Activated T-helper 2 cell treated with anti-CD3 and anti-CD28 coated beads, Interferon-gamma antibody, Interleukin-2, Interleukin-4, amounts not matched to agents 10 μg/mL and 5 μg/mL and 100 μg/mL, durations not matched to agents 14 hours and 24 hours and 36 hours (primary cell): ENCODE measurements at regions of chr12 and their contacts with region 1.

Region 1: DNA sequence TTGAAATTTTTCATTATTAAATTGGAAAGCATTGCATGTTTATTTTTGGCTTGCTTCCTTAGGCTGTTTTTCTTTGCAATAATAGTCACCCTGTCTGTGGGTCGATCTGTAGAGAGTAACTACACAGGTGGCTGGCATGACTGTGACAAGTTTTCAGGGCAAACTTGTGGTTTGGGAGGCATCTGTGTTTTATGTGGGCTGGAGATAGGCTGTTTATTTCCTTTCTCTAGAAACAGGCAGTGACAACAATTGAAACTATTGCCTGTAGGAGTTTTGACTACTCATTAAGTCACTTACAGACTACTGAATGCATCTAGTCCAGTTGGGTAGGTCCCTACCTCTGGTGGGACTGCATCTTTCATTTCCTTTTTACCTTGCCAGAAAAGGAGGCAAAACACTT is 155.6 kb downstream of the DYRK2 start:
- DNase-seq: peak; percentile 26
- H3K4me3 Mint-ChIP-seq: no peak overlapping the region
- H3K27ac Mint-ChIP-seq: no peak overlapping the region
- H3K4me1 Mint-ChIP-seq: peaks cover 29% of the 10 kb centered on the region
- H3K27me3 Mint-ChIP-seq: peaks cover 2% of the 10 kb centered on the region

Region 2: DNA sequence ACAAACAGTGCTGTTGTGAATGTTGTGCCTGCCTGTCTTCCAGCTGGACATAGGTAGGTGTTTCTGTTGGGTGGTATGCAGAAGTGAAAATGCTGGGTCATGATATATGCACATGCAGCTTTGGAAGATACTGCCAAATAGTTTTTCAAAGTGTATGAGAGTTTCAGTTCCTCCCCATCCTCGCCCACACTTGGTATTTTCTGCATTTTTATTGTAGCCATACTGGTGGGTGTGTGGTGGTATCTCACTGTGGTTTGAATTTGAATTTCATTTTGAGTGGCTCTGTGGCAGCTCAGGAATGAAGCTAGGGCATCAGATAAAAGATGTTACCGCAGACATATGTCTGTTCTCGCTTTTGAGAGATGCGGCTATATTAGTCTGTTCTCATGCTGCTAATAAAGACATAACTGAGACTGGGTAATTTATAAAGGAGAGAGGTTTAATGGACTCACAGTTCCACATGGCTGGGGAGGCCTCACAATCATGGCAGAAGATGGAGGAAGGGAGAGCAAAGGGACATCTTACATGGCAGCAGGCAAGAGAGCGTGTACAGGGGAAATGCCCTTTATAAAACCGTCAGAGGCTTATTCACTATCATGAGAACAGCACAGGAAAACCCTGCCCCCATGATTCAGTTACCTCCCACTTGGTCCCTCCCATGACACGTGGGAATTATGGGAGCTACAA is 351.9 kb before region 1 on chr12:
- intact Hi-C with region 1: loop called (anchors 2 kb)
- DNase-seq: no peak
- H3K4me3 Mint-ChIP-seq: no peak overlapping the region
- H3K27ac Mint-ChIP-seq: peak overlapping the region; percentile 64
- H3K4me1 Mint-ChIP-seq: peaks cover 37% of the 10 kb centered on the region
- H3K27me3 Mint-ChIP-seq: peaks cover 38% of the 10 kb centered on the region

Region 3: DNA sequence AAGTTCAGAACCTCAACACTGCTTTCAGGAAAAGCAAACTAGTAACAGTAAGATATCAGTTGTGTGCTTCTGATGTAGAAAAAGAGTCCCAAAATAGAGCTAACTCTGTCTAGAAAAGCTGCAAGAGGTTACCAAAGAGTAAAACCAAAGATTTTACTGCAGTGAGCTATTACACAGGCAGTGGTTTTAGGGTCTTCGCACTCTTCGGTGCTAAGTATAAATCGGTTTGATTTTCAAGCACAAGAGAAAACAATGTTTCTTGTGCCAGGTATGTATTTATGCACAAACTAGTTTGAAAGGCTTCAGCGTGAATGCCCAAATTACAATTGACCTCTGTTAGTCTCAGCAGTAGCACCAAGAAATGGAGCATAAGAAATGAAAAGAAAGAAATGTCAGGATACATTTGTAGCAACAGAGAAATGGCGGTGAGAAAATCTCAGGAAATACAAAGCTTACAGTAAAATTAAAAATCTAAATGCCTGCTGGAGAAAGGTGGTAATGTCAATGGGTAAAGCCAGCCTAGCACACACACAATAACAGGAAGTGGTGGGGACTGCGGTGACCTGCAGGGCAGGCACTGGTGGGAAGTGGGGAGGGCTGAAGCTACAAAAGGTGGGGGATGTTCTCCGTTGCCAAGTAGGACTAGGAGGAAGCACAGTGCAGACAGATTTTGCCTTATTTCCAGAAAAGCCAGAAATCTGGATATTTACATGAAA is 173.6 kb before region 1 on chr12:
- intact Hi-C with region 1: loop called (anchors 5 kb)
- DNase-seq: peak; percentile 81
- H3K4me3 Mint-ChIP-seq: peak overlapping the region; percentile 7
- H3K27ac Mint-ChIP-seq: peak overlapping the region; percentile 52
- H3K4me1 Mint-ChIP-seq: peaks cover 42% of the 10 kb centered on the region
- H3K27me3 Mint-ChIP-seq: peaks cover 1% of the 10 kb centered on the region

Region 4: DNA sequence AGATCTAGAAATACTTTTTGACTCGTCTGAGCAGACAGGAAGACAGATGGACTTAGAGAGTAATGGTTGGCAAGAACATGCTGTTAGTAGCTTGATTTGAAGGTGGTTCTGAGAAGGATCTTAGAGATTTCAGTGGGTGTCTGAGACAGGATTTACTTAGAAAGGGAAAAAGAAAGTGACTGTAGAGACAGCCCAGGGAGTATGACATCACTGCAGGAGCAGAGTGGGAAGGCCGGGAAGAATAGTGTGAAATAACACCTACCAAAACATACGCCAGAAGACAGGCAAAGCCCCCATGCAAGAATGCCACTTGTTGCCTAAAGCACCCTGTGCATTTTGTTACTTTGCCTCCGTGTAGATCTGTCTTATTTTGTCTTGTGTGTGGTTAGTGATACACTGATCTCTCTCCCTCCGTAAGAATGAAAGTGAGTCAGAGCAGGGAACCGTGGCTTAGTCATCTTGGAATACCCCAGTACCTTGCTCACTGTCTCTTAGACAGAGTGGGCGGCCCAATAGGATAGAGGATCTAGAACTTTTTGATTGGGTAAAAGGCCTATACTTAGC is 23.7 kb after region 1 on chr12:
- intact Hi-C with region 1: loop called (anchors 1 kb)
- DNase-seq: peak; percentile 11
- H3K4me3 Mint-ChIP-seq: peak overlapping the region; percentile 50
- H3K27ac Mint-ChIP-seq: peak overlapping the region; percentile 81
- H3K4me1 Mint-ChIP-seq: peaks cover 13% of the 10 kb centered on the region
- H3K27me3 Mint-ChIP-seq: no peaks in the 10 kb centered on the region

Region 5: GRCh38 chr12:67873355-67873754 is 69.2 kb after region 1 on chr12:
- intact Hi-C with region 1: no loop called
- DNase-seq: no peak
- H3K4me3 Mint-ChIP-seq: no peak overlapping the region
- H3K27ac Mint-ChIP-seq: no peak overlapping the region
- H3K4me1 Mint-ChIP-seq: no peaks in the 10 kb centered on the region
- H3K27me3 Mint-ChIP-seq: no peaks in the 10 kb centered on the region

Region 6: DNA sequence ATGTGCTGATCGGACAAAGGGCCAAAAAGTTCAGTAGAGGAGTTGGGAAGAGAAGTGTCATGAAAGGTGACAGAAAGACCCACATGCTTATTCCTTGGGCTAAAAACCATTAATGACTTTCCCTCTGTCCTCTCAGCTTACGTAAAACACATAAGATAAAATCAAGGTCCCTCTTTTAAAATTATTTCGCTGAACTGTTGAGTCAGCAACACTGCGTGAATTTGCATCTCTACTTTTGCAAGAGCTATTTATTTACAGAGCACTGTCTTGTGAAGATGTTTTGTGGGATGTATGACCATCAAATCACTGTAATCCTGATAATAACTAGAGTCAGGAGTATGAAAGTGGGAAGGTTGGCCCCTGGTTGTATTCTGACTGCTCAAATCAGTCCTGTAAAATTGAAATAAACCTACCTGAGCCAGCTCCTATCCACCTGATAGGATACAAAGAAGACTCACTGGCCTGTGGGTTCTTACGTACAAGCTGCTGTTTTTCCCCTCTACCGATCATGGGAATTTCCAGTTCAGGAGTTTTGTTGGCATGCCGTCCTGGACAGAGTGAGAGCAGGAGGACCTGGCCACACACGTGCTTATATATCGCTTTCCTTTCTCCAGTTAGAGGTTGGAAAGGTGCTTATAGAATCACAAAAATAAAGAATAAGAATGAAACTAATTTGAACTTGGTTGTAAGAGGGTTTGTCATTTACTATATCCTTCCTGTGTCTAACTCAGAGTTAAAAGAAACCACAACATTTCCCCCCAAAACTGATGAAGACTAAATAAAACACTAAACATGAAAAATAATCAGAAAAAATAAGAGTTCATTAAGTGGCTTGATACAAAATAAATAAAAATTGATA is 227.9 kb after region 1 on chr12:
- intact Hi-C with region 1: loop called (anchors 10 kb)
- DNase-seq: no peak
- H3K4me3 Mint-ChIP-seq: no peak overlapping the region
- H3K27ac Mint-ChIP-seq: peak overlapping the region; percentile 5
- H3K4me1 Mint-ChIP-seq: peaks cover 29% of the 10 kb centered on the region
- H3K27me3 Mint-ChIP-seq: no peaks in the 10 kb centered on the region

Region 7: GRCh38 chr12:68180792-68181744 is 376.9 kb after region 1 on chr12:
- intact Hi-C with region 1: loop called (anchors 10 kb)
- DNase-seq: peak; percentile 34
- H3K4me3 Mint-ChIP-seq: no peak overlapping the region
- H3K27ac Mint-ChIP-seq: peak overlapping the region; percentile 61
- H3K4me1 Mint-ChIP-seq: peaks cover 38% of the 10 kb centered on the region
- H3K27me3 Mint-ChIP-seq: peaks cover 31% of the 10 kb centered on the region